Activated B cell treated with CpG ODN at 0.5 μM for 24 hours (primary cell): ENCODE measurements at regions of chr18 and their contacts with region 1.

Region 1: GRCh38 chr18:2641638-2642037 is 13.9 kb upstream of the SMCHD1 start:
- DNase-seq: no peak
- ATAC-seq: peak; percentile 59
- H3K4me3 Mint-ChIP-seq: peak overlapping the region; percentile 77
- H3K27ac Mint-ChIP-seq: no peak overlapping the region
- H3K4me1 Mint-ChIP-seq: peaks cover 54% of the 10 kb centered on the region
- H3K27me3 Mint-ChIP-seq: no peaks in the 10 kb centered on the region
- CTCF ChIP-seq: no peak

Region 2: DNA sequence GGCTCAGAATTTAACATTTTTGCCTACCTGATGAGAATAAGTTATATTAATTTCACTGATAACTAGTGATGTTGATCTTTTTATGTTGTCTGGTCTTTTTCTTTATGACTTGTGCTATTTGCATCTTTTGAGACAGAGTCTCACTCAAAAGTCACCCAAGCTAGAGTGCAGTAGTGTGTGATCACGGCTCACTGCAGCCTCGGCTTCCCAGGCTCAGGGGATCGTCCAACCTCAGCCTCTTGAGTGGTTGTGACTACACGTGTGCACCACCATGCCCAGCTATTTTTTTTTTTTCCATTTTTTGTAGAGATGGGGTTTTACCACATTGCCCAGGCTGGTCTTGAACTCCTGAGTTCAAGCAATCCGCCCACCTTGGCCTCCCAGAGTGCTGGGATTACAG is 21.4 kb after region 1 on chr18:
- CTCF ChIA-PET with region 1: interaction called, 10 read pairs
- POLR2A ChIA-PET with region 1: interaction called, 376 read pairs
- intact Hi-C with region 1: no loop called
- DNase-seq: no peak
- ATAC-seq: peak; percentile 51
- H3K4me3 Mint-ChIP-seq: peak overlapping the region; percentile 58
- H3K27ac Mint-ChIP-seq: peak overlapping the region; percentile 78
- H3K4me1 Mint-ChIP-seq: peaks cover 69% of the 10 kb centered on the region
- H3K27me3 Mint-ChIP-seq: no peaks in the 10 kb centered on the region
- CTCF ChIP-seq: no peak

Region 3: DNA sequence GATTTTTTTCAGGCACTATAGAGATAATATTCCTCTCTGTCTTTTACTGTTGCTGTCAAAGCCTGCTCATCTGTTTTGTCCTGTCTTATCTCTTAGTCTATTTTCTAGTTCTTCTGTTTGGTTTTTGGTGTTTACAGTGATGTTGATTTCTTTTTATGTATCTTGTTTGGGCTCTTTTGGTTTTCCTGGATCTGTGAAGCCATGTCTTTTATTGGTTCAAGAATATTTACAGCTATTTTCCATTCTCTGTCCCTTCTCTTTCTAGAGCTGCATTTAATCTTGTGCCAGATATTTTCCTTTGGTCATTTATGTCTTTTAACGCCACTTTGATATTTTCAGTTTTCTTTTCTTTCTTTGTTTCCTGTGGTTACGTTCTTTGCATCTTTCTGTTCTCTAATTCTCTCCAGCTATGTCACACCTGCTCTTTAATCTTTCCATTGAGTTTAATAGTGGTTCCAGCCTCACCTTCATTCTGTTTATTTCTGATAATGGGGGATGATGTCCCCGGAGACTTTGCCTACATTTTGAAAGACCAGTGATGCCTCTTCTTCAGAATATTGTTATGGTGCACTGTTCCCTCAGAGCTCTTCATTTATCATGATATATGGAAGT is 45.9 kb after region 1 on chr18:
- CTCF ChIA-PET with region 1: no interaction called
- POLR2A ChIA-PET with region 1: interaction called, 7 read pairs
- intact Hi-C with region 1: loop called (anchors 2 kb)
- DNase-seq: no peak
- ATAC-seq: peak; percentile 42
- H3K4me3 Mint-ChIP-seq: peak overlapping the region; percentile 69
- H3K27ac Mint-ChIP-seq: peak overlapping the region; percentile 88
- H3K4me1 Mint-ChIP-seq: peaks cover 52% of the 10 kb centered on the region
- H3K27me3 Mint-ChIP-seq: no peaks in the 10 kb centered on the region
- CTCF ChIP-seq: no peak

Region 4: DNA sequence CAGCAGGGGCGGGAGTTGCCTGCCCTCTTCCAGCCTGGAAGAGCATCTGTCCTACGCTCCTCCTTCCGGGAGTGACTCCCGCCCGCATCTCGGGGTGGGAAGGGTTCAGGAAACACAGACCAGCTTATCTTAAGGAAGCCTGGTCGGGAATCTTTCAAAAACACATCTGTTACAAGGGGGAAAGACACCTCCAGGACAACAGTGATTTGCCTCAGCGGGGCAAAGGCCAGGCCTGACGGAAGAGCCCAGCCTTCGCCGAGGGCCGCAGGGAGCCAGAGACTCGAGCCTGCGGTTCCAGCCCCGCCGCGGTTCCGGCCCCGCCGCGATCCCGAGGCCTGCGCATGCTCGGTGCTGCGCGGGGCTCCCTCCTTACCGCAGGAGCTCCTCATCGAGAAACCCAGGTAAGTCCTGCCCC is 770.2 kb after region 1 on chr18:
- CTCF ChIA-PET with region 1: no interaction called
- POLR2A ChIA-PET with region 1: no interaction called
- intact Hi-C with region 1: no loop called
- DNase-seq: peak; percentile 32
- ATAC-seq: peak; percentile 66
- H3K4me3 Mint-ChIP-seq: peak overlapping the region; percentile 74
- H3K27ac Mint-ChIP-seq: no peak overlapping the region
- H3K4me1 Mint-ChIP-seq: peaks cover 12% of the 10 kb centered on the region
- H3K27me3 Mint-ChIP-seq: no peaks in the 10 kb centered on the region
- CTCF ChIP-seq: no peak